Gastrocnemius medialis (tissue), 4 donors: ENCODE measurements at regions of chr3 and their contacts with region 1.

Region 1: DNA sequence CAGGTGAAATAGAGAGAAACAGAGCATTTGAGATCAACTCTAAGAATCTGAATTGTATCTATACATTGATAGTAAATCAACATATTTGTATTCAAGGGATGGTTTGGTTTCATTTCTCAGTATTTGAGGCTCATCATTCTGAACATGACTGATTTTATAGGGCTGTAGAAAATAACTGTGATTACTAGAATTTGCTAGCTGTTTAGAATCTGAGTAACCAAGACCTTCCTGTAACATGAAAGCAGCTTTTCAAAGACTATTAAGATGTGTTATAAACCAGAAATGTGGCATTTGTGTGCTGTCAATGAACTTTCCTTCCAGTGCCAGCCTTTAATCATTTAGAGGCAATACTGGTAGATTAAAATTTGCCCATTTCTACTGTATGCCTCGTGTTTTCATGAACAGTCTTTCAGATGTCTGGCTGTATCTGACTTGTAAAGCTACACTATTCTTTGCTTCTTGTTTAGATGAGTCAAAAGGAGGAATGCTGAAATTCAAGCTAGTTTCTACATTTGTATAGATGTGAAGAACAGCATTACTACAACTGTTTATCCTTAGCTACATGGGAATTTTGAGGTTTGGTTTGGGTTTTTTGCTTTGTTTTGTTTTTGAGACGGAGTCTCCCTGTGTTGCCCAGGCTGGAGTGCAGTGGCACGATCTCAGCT is 137.3 kb upstream of the BHLHE40 start:
- DNase-seq: no peak
- ATAC-seq: no peak
- H3K4me3 ChIP-seq: no peak overlapping the region
- H3K27ac ChIP-seq: no peak overlapping the region
- H3K4me1 ChIP-seq: no peaks in the 10 kb centered on the region
- H3K27me3 ChIP-seq: no peaks in the 10 kb centered on the region
- CTCF ChIP-seq: no peak
- POLR2A ChIP-seq: no peak

Region 2: DNA sequence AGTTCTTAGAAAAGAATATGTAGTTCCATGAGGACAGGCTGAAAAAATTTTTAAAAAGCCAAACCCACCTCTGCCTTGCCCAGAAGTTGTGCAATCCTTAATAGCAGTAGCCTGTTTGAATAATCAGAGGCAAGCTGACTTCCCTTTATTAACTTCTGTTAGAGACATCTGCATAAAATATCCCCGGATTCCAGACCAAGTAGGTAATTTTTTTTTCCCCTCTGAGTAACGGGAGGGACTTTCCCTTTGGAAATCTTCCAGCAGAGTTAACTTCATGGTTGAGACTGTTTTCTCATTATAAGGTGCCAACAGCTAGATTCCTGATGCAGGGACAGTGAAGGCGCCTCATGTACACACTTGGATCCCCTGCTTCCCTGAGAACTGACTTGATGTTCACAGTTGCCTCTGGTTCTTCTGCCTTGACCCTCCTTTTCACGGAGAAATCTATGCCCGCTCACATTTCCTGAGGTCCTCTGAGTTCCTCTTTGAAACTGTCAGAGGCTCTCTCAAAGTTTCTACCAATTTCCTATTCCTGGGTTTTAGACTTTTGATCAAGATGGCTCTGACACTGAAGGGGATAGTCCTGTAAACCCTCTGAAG is 90.3 kb before region 1 on chr3:
- in situ Hi-C with region 1: no loop called
- intact Hi-C with region 1: no loop called
- DNase-seq: no peak
- ATAC-seq: peak; percentile 45 to 49
- H3K4me3 ChIP-seq: no peak overlapping the region
- H3K27ac ChIP-seq: peak overlapping the region; percentile 70 to 78 (median 75)
- H3K4me1 ChIP-seq: peaks cover 36 to 47% of the 10 kb centered on the region in 2 donors
- H3K27me3 ChIP-seq: no peaks in the 10 kb centered on the region
- CTCF ChIP-seq: no peak
- POLR2A ChIP-seq: no peak

Region 3: DNA sequence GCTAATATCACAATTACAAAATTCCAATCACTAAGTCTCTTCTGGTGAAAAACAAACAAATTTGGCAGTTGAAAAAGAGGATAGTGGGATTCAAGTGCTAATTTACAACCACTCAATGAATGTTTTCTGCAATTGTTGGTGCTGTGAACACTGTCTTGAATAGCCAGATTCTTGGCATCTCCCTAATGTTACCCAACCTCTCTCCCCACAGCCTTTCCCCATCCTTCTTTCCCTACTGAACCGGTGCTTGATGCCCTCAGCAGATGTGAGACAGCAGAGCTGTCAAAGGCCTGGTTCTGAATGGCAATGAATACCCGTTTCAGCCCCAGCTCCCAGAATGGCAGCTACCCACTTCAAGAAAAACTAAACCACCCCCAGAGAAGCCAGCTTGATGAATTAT is 114.8 kb after region 1 on chr3:
- in situ Hi-C with region 1: no loop called
- intact Hi-C with region 1: loop called (anchors 5 kb)
- DNase-seq: no peak
- ATAC-seq: no peak
- H3K4me3 ChIP-seq: no peak overlapping the region
- H3K27ac ChIP-seq: no peak overlapping the region
- H3K4me1 ChIP-seq: no peaks in the 10 kb centered on the region
- H3K27me3 ChIP-seq: no peaks in the 10 kb centered on the region
- CTCF ChIP-seq: no peak
- POLR2A ChIP-seq: no peak